WTC11 (cell line): ENCODE measurements at regions of chr7 and their contacts with region 1.

Region 1: GRCh38 chr7:79298145-79298760 is 155.2 kb downstream of the MAGI2 start:
- DNase-seq: no peak
- ATAC-seq: no peak
- H3K4me3 Mint-ChIP-seq: no peak overlapping the region
- H3K27ac Mint-ChIP-seq: no peak overlapping the region
- H3K4me1 Mint-ChIP-seq: peaks cover 4% of the 10 kb centered on the region; the same call in 1 of the 2 replicates
- H3K27me3 Mint-ChIP-seq: no peaks in the 10 kb centered on the region; the same call in 1 of the 2 replicates
- CTCF ChIP-seq: peak; percentile 26; the same call in 1 of the 2 replicates

Region 2: GRCh38 chr7:79282063-79282694 is 16.1 kb before region 1 on chr7:
- CTCF ChIA-PET with region 1: interaction called, 16 read pairs
- POLR2A ChIA-PET with region 1: no interaction called
- DNase-seq: no peak
- ATAC-seq: peak; percentile 52; the same call in 1 of the 2 replicates
- H3K4me3 Mint-ChIP-seq: no peak overlapping the region
- H3K27ac Mint-ChIP-seq: no peak overlapping the region
- H3K4me1 Mint-ChIP-seq: no peaks in the 10 kb centered on the region
- H3K27me3 Mint-ChIP-seq: no peaks in the 10 kb centered on the region
- CTCF ChIP-seq: no peak

Region 3: DNA sequence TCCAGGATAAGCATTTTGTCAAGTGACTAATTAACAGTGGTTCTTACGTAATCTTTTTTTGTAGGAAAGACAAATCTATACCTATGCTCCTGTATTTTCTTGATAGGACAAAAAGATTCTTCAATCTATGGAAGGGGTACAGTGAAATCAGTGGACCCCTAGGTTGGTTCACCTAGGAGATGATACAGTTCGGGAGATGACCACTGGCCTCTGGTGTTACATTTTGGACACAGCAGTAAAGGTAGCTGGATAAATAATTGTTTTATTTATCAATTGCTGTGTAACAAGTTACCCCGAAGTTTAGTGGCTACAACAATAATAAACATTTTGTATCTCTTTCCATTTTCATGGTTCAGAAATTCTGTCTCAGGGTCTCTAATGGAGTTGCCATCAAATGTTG is 443.4 kb after region 1 on chr7:
- CTCF ChIA-PET with region 1: interaction called, 33 read pairs
- POLR2A ChIA-PET with region 1: no interaction called
- DNase-seq: no peak
- ATAC-seq: peak; percentile 80
- H3K4me3 Mint-ChIP-seq: no peak overlapping the region
- H3K27ac Mint-ChIP-seq: no peak overlapping the region
- H3K4me1 Mint-ChIP-seq: no peaks in the 10 kb centered on the region
- H3K27me3 Mint-ChIP-seq: no peaks in the 10 kb centered on the region; the same call in 1 of the 2 replicates
- CTCF ChIP-seq: no peak